AG04449 (cell line): ENCODE measurements at regions of chr6 and their contacts with region 1.

Region 1: GRCh38 chr6:3848925-3849605 is at the start of gene FAM50B:
- DNase-seq: no peak
- H3K4me3 ChIP-seq: peak within 1 kb of the TSS; percentile 59
- CTCF ChIP-seq: peak; percentile 94

Region 2: GRCh38 chr6:3732345-3733141 is 116.5 kb before region 1 on chr6:
- CTCF ChIA-PET with region 1: interaction called, 19 read pairs
- POLR2A ChIA-PET with region 1: no interaction called
- DNase-seq: no peak
- H3K4me3 ChIP-seq: no peak overlapping the region
- CTCF ChIP-seq: peak; percentile 84

Region 3: GRCh38 chr6:3825851-3826581 is 23.0 kb before region 1 on chr6:
- CTCF ChIA-PET with region 1: interaction called, 10 read pairs
- POLR2A ChIA-PET with region 1: no interaction called
- DNase-seq: peak; percentile 97
- H3K4me3 ChIP-seq: peak overlapping the region; percentile 23; the same call in 1 of the 2 replicates
- CTCF ChIP-seq: no peak

Region 4: GRCh38 chr6:3868544-3868943 is 19.5 kb after region 1 on chr6:
- CTCF ChIA-PET with region 1: interaction called, 53 read pairs
- POLR2A ChIA-PET with region 1: interaction called, 3 read pairs
- DNase-seq: no peak
- H3K4me3 ChIP-seq: no peak overlapping the region
- CTCF ChIP-seq: no peak

Region 5: GRCh38 chr6:3894590-3895311 is 45.7 kb after region 1 on chr6:
- CTCF ChIA-PET with region 1: interaction called, 99 read pairs
- POLR2A ChIA-PET with region 1: no interaction called
- DNase-seq: no peak
- H3K4me3 ChIP-seq: no peak overlapping the region
- CTCF ChIP-seq: no peak

Region 6: DNA sequence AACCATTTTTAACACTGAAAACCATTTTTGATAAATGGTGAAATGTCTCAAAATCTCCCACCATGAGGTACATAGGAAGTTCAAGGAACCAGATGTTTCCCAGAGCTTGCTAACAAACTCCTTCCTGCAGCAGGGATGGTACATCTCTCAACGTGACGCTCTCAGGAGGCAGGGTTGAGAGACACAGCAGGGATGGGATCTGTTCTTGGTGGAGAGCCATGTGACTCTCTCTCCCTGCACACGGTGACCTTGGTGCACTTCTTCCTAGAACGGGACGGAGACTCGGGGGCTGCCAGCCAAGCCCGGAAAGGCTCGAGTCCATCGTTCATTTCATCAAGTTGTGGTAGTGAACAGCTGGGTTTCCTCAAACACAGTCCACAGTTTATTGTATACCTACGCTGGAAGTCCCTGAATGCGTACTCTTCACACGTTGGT is 94.3 kb after region 1 on chr6:
- CTCF ChIA-PET with region 1: interaction called, 17 read pairs
- POLR2A ChIA-PET with region 1: no interaction called
- DNase-seq: no peak
- H3K4me3 ChIP-seq: no peak overlapping the region
- CTCF ChIP-seq: no peak

Region 7: DNA sequence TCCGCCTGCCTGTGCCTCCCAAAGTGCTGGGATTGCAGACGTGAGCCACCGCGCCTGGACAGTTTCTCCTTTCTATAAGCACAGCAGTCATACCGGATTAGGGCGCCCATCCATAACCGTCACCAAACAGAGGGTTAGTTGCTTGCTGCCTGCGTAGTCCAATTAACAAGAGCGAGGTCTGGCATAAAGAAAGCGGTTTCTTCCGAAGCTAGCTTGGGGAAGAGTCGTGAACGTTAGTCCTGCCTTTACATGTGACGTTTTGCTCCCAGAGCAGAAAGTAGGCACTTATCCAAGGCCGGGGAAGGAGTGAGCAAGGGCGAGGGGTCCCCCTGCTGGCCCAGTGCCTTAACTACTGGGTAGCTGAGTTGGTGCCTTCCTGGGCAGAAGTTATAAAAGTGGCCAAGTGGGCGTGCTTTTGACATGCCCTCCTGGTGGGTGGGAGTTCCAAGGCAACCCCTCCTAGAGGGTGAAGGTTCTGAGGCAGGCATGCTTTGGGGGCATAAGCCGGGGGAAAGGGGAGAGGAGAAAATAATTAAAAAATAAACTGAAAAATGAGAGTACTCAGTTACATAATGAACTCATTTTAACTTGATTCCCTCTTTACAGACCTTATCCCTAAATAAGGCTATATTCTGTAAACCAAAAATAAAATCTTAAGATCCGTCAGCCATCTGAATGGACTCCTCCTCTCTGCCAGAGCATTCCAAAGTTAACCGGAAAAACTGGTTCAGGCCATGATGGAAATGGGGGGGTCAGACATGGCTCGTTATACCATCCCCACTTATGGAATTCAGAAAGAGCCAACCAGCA is 141.8 kb after region 1 on chr6:
- CTCF ChIA-PET with region 1: interaction called, 29 read pairs
- POLR2A ChIA-PET with region 1: no interaction called
- DNase-seq: peak; percentile 50
- H3K4me3 ChIP-seq: peak overlapping the region; percentile 23
- CTCF ChIP-seq: peak; percentile 94